K562 (cell line): ENCODE measurements at regions of chr10 and their contacts with region 1.

Region 1: GRCh38 chr10:15433850-15434537 is 62.9 kb upstream of the FAM171A1 start:
- DNase-seq: peak; percentile 52 to 83 (median 57)
- ATAC-seq: peak; percentile 84
- H3K4me3 ChIP-seq: no peak overlapping the region
- H3K27ac ChIP-seq: no peak overlapping the region; the same call in 2 of the 3 replicates
- H3K4me1 ChIP-seq: peaks cover 6 to 17% of the 10 kb centered on the region in 2 experiments; a peak in 4 of 5 replicates
- H3K27me3 ChIP-seq: no peaks in the 10 kb centered on the region
- CTCF ChIP-seq: peak; percentile 55 to 83 (median 61); a peak in 5 of 6 replicates
- EP300 ChIP-seq: no peak
- POLR2A ChIP-seq: no peak
- RAD21 ChIP-seq: peak; percentile 90 to 95

Region 2: DNA sequence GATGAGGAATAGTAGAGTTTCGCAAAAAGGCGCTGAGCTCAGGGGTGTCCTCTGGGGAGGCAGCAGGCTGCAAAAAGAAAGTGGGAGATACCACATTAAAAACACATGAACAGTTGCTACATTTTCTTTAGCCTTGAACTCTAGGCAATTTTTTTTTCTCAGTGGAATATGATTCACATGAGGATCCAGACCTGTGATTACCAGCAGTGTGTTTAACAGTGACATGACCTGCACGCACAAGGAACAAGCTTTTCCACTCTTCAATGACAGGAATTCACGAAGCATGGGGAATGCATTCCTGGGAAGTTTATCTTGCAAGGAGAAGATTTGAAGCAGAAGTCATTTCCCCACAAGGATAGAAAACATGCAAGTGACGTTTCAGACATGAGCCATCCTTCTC is 124.1 kb after region 1 on chr10:
- CTCF ChIA-PET with region 1: no interaction called
- POLR2A ChIA-PET with region 1: no interaction called
- in situ Hi-C with region 1: no loop called
- intact Hi-C with region 1: loop called (anchors 10 kb)
- DNase-seq: no peak
- ATAC-seq: no peak
- H3K4me3 ChIP-seq: no peak overlapping the region
- H3K27ac ChIP-seq: no peak overlapping the region
- H3K4me1 ChIP-seq: peaks cover 3 to 8% of the 10 kb centered on the region in 2 experiments; a peak in 1 of 5 replicates
- H3K27me3 ChIP-seq: no peaks in the 10 kb centered on the region
- CTCF ChIP-seq: no peak
- EP300 ChIP-seq: no peak
- POLR2A ChIP-seq: no peak
- RAD21 ChIP-seq: no peak

Region 3: DNA sequence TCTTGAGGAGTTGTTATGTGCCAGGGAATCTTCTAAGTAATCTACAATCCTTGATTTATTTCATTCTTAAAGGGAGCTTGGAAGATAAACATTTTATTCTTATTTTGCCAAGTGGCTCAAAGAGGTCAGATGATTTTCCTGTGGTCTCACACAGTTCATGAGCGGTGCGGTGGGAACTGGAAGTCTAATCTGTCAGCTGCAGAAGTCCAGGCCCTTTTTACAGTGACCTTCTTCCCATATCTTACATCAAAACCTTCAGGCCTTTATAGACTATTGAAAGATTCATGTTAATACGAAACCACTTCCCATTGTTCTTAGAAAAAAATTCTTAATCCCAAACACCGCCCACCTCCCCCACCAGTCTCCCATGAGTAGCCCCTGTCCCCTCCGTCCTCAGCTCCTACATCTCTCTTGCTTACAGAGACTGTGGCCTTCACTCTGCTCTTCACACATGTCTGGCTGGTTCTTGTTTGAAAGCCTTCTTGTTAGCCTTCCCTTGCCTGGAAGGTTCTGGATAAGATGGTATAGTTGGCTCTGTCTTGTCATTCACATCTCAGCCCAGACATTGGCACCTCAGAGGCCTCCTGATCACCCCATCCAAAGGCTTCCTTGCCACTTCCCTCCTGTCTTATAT is 224.2 kb after region 1 on chr10:
- CTCF ChIA-PET with region 1: no interaction called
- POLR2A ChIA-PET with region 1: no interaction called
- in situ Hi-C with region 1: no loop called
- intact Hi-C with region 1: loop called (anchors 10 kb)
- DNase-seq: peak in 2 of 4 experiments; percentile 9 to 61
- ATAC-seq: peak; percentile 76
- H3K4me3 ChIP-seq: no peak overlapping the region
- H3K27ac ChIP-seq: peak overlapping the region; percentile 53; the same call in 2 of the 3 replicates
- H3K4me1 ChIP-seq: peaks cover 0 to 10% of the 10 kb centered on the region in 2 experiments; a peak in 3 of 5 replicates
- H3K27me3 ChIP-seq: peaks cover 0 to 3% of the 10 kb centered on the region in 2 experiments; a peak in 1 of 5 replicates
- CTCF ChIP-seq: no peak
- EP300 ChIP-seq: peak; percentile 61
- POLR2A ChIP-seq: no peak
- RAD21 ChIP-seq: peak in 1 of 2 experiments; percentile 23; a peak in 1 of 4 replicates

Region 4: GRCh38 chr10:15725603-15726002 is 291.6 kb after region 1 on chr10:
- CTCF ChIA-PET with region 1: interaction called, 19 read pairs
- POLR2A ChIA-PET with region 1: no interaction called
- in situ Hi-C with region 1: loop called (anchors 5 kb)
- intact Hi-C with region 1: loop called (anchors 2 kb)
- DNase-seq: peak; percentile 50 to 85 (median 68)
- ATAC-seq: peak; percentile 98
- H3K4me3 ChIP-seq: no peak overlapping the region
- H3K27ac ChIP-seq: no peak overlapping the region
- H3K4me1 ChIP-seq: peaks cover 0 to 5% of the 10 kb centered on the region in 2 experiments; a peak in 3 of 5 replicates
- H3K27me3 ChIP-seq: peaks cover 0 to 4% of the 10 kb centered on the region in 2 experiments; a peak in 1 of 5 replicates
- CTCF ChIP-seq: peak; percentile 68 to 92 (median 69)
- EP300 ChIP-seq: peak; percentile 27; the same call in 1 of the 2 replicates
- POLR2A ChIP-seq: no peak
- RAD21 ChIP-seq: peak; percentile 96 to 97

Region 5: DNA sequence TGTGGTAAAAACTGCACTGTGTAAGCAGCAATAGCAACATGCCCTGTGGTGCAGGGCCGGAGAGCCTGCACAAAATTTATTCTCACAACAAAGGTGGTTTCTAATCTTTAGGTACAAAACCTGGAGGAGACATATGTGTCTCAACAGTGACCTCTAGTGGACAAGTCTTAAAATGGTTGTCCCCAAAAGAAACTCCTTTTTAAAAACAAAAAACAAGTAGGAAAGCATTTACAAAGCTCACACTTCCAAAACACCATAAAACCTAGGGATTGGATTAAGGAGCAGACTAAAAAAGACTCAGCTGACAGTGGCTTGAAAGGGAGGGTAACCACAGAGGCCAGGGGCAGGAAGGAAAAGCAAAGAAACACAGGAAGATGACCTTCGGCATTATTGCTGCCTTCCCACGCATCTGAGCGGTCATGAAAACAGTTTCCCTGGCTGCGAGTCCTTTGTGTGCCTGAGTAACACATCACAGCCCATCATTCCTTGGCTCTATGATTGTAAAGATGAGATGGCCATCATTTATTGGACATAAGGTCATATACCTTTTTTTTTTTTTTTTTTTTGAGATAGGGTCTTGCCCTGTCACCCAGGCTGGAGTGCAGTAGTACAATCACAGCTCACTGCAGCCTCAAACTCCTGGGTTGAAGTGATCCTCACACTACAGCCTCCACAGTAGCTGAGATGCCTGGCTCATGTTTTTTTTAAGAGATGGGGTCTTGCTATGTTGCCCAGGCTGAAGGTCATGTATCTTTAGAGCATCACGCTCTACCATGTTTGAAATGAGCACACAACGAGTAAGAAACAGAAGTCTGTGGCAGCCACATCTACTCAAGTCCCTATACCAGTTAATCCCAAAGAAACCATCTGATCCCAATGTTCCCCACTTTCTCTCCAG is 1343.7 kb after region 1 on chr10:
- CTCF ChIA-PET with region 1: no interaction called
- POLR2A ChIA-PET with region 1: no interaction called
- in situ Hi-C with region 1: loop called (anchors 25 kb)
- intact Hi-C with region 1: no loop called
- DNase-seq: peak; percentile 64 to 70 (median 66)
- ATAC-seq: peak; percentile 57; the same call in 2 of the 3 replicates
- H3K4me3 ChIP-seq: no peak overlapping the region
- H3K27ac ChIP-seq: no peak overlapping the region
- H3K4me1 ChIP-seq: no peaks in the 10 kb centered on the region
- H3K27me3 ChIP-seq: no peaks in the 10 kb centered on the region
- CTCF ChIP-seq: peak; percentile 50 to 80 (median 61); a peak in 5 of 6 replicates
- EP300 ChIP-seq: no peak
- POLR2A ChIP-seq: no peak
- RAD21 ChIP-seq: peak; percentile 77 to 82